Endothelial cell of umbilical vein (primary cell): ENCODE measurements at regions of chr18 and their contacts with region 1.

Region 1: DNA sequence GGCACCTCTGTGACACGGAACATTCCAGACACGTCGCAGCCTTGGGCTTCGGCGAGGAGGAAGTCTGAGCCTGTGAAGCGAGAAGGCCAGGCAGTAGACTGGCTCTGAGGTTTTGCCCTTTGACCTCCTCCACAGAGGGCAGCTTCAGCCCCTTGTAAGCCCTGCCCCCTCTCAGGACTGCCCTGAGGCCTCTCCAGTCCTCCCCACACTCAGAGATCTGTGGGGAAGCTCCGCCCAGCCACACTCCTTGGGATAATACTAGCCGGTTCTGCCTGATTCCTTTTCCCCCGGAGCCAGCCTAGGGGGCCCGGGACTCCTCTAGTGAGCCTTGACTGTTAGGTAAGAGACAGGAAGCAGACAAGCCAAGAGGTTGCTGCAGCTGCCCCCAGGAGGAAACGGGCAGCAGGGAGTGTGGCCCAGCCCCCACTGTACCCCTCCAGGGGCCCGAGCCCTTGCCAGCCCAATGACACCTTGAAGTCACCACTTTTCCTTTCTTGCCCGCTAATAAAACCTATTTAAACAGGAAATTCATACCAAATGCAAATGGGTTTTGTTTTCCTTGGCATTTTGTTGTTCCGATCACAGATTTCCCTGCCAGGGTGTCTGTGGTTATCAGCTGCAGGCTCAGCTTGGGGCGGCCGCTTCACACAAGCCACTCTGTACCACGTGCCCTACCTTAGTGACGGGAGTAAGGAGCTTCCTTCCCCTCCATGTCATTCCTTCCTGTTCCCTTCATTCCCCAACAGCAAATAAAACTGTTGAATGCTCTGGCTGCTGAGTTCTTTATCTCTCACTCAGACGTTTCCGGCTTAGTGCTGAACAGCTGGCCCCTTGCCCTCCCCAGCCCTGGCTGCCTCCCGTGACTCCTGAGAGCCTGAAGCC is 124.7 kb downstream of the CABLES1 start:
- DNase-seq: peak; percentile 99
- H3K4me3 ChIP-seq: no peak overlapping the region
- H3K27ac ChIP-seq: peak overlapping the region; percentile 87
- H3K4me1 ChIP-seq: peaks cover 36% of the 10 kb centered on the region
- H3K27me3 ChIP-seq: no peaks in the 10 kb centered on the region
- CTCF ChIP-seq: no peak
- POLR2A ChIP-seq: peak; percentile 50

Region 2: GRCh38 chr18:23194155-23194996 is 65.6 kb before region 1 on chr18:
- CTCF ChIA-PET with region 1: interaction called, 5 read pairs
- POLR2A ChIA-PET with region 1: interaction called, 4 read pairs
- dilution Hi-C with region 1: no loop called
- intact Hi-C with region 1: loop called (anchors 1 kb)
- DNase-seq: peak; percentile 44
- H3K4me3 ChIP-seq: no peak overlapping the region
- H3K27ac ChIP-seq: peak overlapping the region; percentile 49
- H3K4me1 ChIP-seq: peaks cover 35% of the 10 kb centered on the region
- H3K27me3 ChIP-seq: no peaks in the 10 kb centered on the region
- CTCF ChIP-seq: no peak
- POLR2A ChIP-seq: no peak

Region 3: GRCh38 chr18:23237524-23238151 is 22.3 kb before region 1 on chr18:
- CTCF ChIA-PET with region 1: interaction called, 13 read pairs
- POLR2A ChIA-PET with region 1: interaction called, 5 read pairs
- dilution Hi-C with region 1: no loop called
- intact Hi-C with region 1: loop called (anchors 1 kb)
- DNase-seq: peak; percentile 84
- H3K4me3 ChIP-seq: no peak overlapping the region
- H3K27ac ChIP-seq: peak overlapping the region; percentile 83
- H3K4me1 ChIP-seq: peaks cover 21% of the 10 kb centered on the region
- H3K27me3 ChIP-seq: no peaks in the 10 kb centered on the region
- CTCF ChIP-seq: peak; percentile 51 to 66
- POLR2A ChIP-seq: no peak

Region 4: DNA sequence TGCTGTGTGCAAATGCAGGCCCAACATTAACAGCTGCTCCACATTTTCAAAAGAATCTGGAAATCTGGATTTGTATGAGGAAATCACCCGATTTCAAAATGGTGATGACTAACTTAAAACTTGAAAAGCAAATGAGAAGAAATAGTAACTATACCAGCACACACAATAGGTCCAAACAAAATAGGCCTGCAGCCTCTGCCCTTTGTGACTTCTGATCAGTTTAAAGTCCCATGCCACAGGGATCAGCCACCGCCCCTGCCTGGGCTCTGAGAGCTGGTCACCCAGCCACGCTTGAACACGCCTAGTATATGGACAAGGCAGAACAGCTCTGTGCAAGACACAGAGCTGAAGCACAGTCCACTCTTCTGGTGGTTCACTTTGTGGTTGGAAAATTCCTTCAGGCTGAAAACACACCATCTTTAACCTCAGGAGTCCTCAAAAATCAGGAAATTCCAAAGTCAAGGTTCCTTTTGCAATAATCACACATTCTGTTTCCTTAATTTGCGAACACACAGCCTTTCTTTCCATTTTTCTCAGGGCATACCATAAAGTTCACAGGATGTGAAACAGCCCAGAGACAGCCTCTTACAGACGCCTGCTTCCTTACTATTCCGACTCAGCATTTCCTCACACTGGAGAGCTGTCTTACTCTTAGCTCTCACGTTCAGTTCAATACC is 43.0 kb after region 1 on chr18:
- CTCF ChIA-PET with region 1: interaction called, 7 read pairs
- POLR2A ChIA-PET with region 1: interaction called, 7 read pairs
- dilution Hi-C with region 1: no loop called
- intact Hi-C with region 1: loop called (anchors 1 kb)
- DNase-seq: peak; percentile 98
- H3K4me3 ChIP-seq: no peak overlapping the region
- H3K27ac ChIP-seq: peak overlapping the region; percentile 88
- H3K4me1 ChIP-seq: peaks cover 44% of the 10 kb centered on the region
- H3K27me3 ChIP-seq: no peaks in the 10 kb centered on the region
- CTCF ChIP-seq: no peak
- POLR2A ChIP-seq: peak; percentile 75

Region 5: GRCh38 chr18:23357996-23358594 is 98.2 kb after region 1 on chr18:
- CTCF ChIA-PET with region 1: interaction called, 11 read pairs
- POLR2A ChIA-PET with region 1: no interaction called
- dilution Hi-C with region 1: no loop called
- intact Hi-C with region 1: no loop called
- DNase-seq: peak; percentile 63
- H3K4me3 ChIP-seq: no peak overlapping the region
- H3K27ac ChIP-seq: no peak overlapping the region
- H3K4me1 ChIP-seq: peaks cover 10% of the 10 kb centered on the region
- H3K27me3 ChIP-seq: no peaks in the 10 kb centered on the region
- CTCF ChIP-seq: no peak
- POLR2A ChIP-seq: no peak

Region 6: GRCh38 chr18:23416298-23416697 is 156.4 kb after region 1 on chr18:
- CTCF ChIA-PET with region 1: interaction called, 13 read pairs
- POLR2A ChIA-PET with region 1: no interaction called
- dilution Hi-C with region 1: no loop called
- intact Hi-C with region 1: loop called (anchors 1 kb)
- DNase-seq: no peak
- H3K4me3 ChIP-seq: no peak overlapping the region
- H3K27ac ChIP-seq: no peak overlapping the region
- H3K4me1 ChIP-seq: no peaks in the 10 kb centered on the region
- H3K27me3 ChIP-seq: no peaks in the 10 kb centered on the region
- CTCF ChIP-seq: no peak
- POLR2A ChIP-seq: no peak

Region 7: GRCh38 chr18:23515911-23516546 is 256.1 kb after region 1 on chr18:
- CTCF ChIA-PET with region 1: no interaction called
- POLR2A ChIA-PET with region 1: no interaction called
- dilution Hi-C with region 1: no loop called
- intact Hi-C with region 1: no loop called
- DNase-seq: peak; percentile 71
- H3K4me3 ChIP-seq: no peak overlapping the region
- H3K27ac ChIP-seq: no peak overlapping the region
- H3K4me1 ChIP-seq: peaks cover 11% of the 10 kb centered on the region
- H3K27me3 ChIP-seq: no peaks in the 10 kb centered on the region
- CTCF ChIP-seq: peak; percentile 89 to 94
- POLR2A ChIP-seq: no peak